ENCODE measurements at regions of chr16 and their contacts with region 1.

Region 1: GRCh38 chr16:79770244-79771064 is 169.9 kb upstream of the MAF start:
- DNase-seq: peak; percentile 94
- H3K4me3 ChIP-seq: peak overlapping the region; percentile 61
- H3K4me3 Mint-ChIP-seq: peak overlapping the region; percentile 88
- H3K27ac Mint-ChIP-seq: peak overlapping the region; percentile 99
- H3K4me1 ChIP-seq: peaks cover 43% of the 10 kb centered on the region
- H3K4me1 Mint-ChIP-seq: peaks cover 35% of the 10 kb centered on the region
- H3K27me3 ChIP-seq: no peaks in the 10 kb centered on the region
- H3K27me3 Mint-ChIP-seq: no peaks in the 10 kb centered on the region
- CTCF ChIP-seq: peak in 1 of 2 experiments; percentile 26

Region 2: GRCh38 chr16:79154086-79154485 is 616.4 kb before region 1 on chr16:
- CTCF ChIA-PET with region 1: no interaction called
- POLR2A ChIA-PET with region 1: no interaction called
- intact Hi-C with region 1: loop called (anchors 10 kb)
- DNase-seq: no peak
- H3K4me3 ChIP-seq: no peak overlapping the region
- H3K4me3 Mint-ChIP-seq: no peak overlapping the region
- H3K27ac Mint-ChIP-seq: no peak overlapping the region
- H3K4me1 ChIP-seq: peaks cover 35% of the 10 kb centered on the region
- H3K4me1 Mint-ChIP-seq: peaks cover 6% of the 10 kb centered on the region
- H3K27me3 ChIP-seq: no peaks in the 10 kb centered on the region
- H3K27me3 Mint-ChIP-seq: no peaks in the 10 kb centered on the region
- CTCF ChIP-seq: no peak

Region 3: DNA sequence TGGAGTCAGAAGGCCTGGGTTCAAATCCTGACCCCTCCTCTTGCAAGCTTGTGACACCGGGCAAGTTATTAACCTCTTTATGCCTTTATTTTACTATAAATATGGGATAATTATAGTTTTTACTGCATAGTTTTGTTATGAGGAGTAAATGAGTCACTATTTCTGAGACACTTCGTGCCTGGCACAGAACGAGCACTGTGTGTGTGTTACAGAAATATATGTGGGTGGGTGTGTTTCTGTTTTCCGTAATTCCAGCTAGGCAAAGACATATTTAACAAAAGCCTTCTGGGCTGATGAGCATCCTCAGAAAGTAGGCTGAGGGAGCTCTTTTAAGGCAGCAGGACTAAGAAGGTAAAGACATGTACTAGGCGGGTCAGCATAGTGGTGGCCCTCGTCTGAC is 587.8 kb before region 1 on chr16:
- CTCF ChIA-PET with region 1: no interaction called
- POLR2A ChIA-PET with region 1: no interaction called
- intact Hi-C with region 1: no loop called
- DNase-seq: no peak
- H3K4me3 ChIP-seq: no peak overlapping the region
- H3K4me3 Mint-ChIP-seq: no peak overlapping the region
- H3K27ac Mint-ChIP-seq: no peak overlapping the region
- H3K4me1 ChIP-seq: no peaks in the 10 kb centered on the region
- H3K4me1 Mint-ChIP-seq: no peaks in the 10 kb centered on the region
- H3K27me3 ChIP-seq: no peaks in the 10 kb centered on the region
- H3K27me3 Mint-ChIP-seq: no peaks in the 10 kb centered on the region
- CTCF ChIP-seq: no peak

Region 4: GRCh38 chr16:79758615-79759341 is 11.7 kb before region 1 on chr16:
- CTCF ChIA-PET with region 1: interaction called, 9 read pairs
- POLR2A ChIA-PET with region 1: interaction called, 5 read pairs
- intact Hi-C with region 1: loop called (anchors 1 kb)
- DNase-seq: peak in 1 of 2 experiments; percentile 55
- H3K4me3 ChIP-seq: no peak overlapping the region
- H3K4me3 Mint-ChIP-seq: peak overlapping the region; percentile 20
- H3K27ac Mint-ChIP-seq: peak overlapping the region; percentile 61
- H3K4me1 ChIP-seq: peaks cover 37% of the 10 kb centered on the region
- H3K4me1 Mint-ChIP-seq: peaks cover 55% of the 10 kb centered on the region
- H3K27me3 ChIP-seq: no peaks in the 10 kb centered on the region
- H3K27me3 Mint-ChIP-seq: no peaks in the 10 kb centered on the region
- CTCF ChIP-seq: no peak

Region 5: GRCh38 chr16:79988721-79989215 is 218.3 kb after region 1 on chr16:
- CTCF ChIA-PET with region 1: no interaction called
- POLR2A ChIA-PET with region 1: no interaction called
- intact Hi-C with region 1: loop called (anchors 5 kb)
- DNase-seq: peak; percentile 54 to 76
- H3K4me3 ChIP-seq: no peak overlapping the region
- H3K4me3 Mint-ChIP-seq: peak overlapping the region; percentile 25
- H3K27ac Mint-ChIP-seq: peak overlapping the region; percentile 87
- H3K4me1 ChIP-seq: peaks cover 33% of the 10 kb centered on the region
- H3K4me1 Mint-ChIP-seq: peaks cover 34% of the 10 kb centered on the region
- H3K27me3 ChIP-seq: no peaks in the 10 kb centered on the region
- H3K27me3 Mint-ChIP-seq: no peaks in the 10 kb centered on the region
- CTCF ChIP-seq: no peak

Region 6: GRCh38 chr16:80369138-80369958 is 598.9 kb after region 1 on chr16:
- CTCF ChIA-PET with region 1: interaction called, 4 read pairs
- POLR2A ChIA-PET with region 1: no interaction called
- intact Hi-C with region 1: loop called (anchors 1 kb)
- DNase-seq: peak; percentile 74 to 79
- H3K4me3 ChIP-seq: no peak overlapping the region
- H3K4me3 Mint-ChIP-seq: no peak overlapping the region
- H3K27ac Mint-ChIP-seq: no peak overlapping the region
- H3K4me1 ChIP-seq: peaks cover 9% of the 10 kb centered on the region
- H3K4me1 Mint-ChIP-seq: peaks cover 10% of the 10 kb centered on the region
- H3K27me3 ChIP-seq: no peaks in the 10 kb centered on the region
- H3K27me3 Mint-ChIP-seq: no peaks in the 10 kb centered on the region
- CTCF ChIP-seq: peak; percentile 68 to 84